Activated CD4-positive, alpha-beta T cell treated with anti-CD3 and anti-CD28 coated beads, Interleukin-2, amount 10 ng/mL, durations not matched to agents 24 days and 14 days (primary cell): ENCODE measurements at regions of chr7 and their contacts with region 1.

Region 1: DNA sequence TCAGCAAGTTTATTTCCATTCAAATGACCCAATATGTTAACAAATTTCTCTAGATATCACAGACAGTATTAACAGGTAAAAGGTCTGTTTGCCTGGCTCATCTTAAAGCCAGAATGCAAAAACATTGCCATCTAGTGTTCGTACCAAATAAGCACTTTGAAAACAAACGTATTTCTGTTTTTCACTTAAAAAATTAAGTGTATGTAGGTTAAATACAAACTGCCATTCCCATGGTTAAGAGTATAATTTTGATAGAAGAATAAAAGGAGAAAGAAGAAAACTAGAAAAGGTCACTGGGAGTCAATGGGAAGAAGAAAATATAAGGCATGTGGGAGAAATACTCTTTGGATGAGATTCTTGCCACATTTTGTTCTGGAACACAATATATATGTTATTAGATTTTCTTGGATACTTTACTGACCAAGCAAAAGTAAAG is 51.0 kb downstream of the ORC5 start:
- DNase-seq: no peak
- H3K4me3 Mint-ChIP-seq: no peak overlapping the region
- H3K27ac Mint-ChIP-seq: no peak overlapping the region
- H3K4me1 Mint-ChIP-seq: no peaks in the 10 kb centered on the region
- H3K27me3 Mint-ChIP-seq: no peaks in the 10 kb centered on the region

Region 2: GRCh38 chr7:103573479-103574058 is 583.3 kb before region 1 on chr7:
- intact Hi-C with region 1: loop called (anchors 1 kb)
- DNase-seq: no peak
- H3K4me3 Mint-ChIP-seq: no peak overlapping the region
- H3K27ac Mint-ChIP-seq: no peak overlapping the region
- H3K4me1 Mint-ChIP-seq: no peaks in the 10 kb centered on the region
- H3K27me3 Mint-ChIP-seq: peaks cover 6% of the 10 kb centered on the region

Region 3: DNA sequence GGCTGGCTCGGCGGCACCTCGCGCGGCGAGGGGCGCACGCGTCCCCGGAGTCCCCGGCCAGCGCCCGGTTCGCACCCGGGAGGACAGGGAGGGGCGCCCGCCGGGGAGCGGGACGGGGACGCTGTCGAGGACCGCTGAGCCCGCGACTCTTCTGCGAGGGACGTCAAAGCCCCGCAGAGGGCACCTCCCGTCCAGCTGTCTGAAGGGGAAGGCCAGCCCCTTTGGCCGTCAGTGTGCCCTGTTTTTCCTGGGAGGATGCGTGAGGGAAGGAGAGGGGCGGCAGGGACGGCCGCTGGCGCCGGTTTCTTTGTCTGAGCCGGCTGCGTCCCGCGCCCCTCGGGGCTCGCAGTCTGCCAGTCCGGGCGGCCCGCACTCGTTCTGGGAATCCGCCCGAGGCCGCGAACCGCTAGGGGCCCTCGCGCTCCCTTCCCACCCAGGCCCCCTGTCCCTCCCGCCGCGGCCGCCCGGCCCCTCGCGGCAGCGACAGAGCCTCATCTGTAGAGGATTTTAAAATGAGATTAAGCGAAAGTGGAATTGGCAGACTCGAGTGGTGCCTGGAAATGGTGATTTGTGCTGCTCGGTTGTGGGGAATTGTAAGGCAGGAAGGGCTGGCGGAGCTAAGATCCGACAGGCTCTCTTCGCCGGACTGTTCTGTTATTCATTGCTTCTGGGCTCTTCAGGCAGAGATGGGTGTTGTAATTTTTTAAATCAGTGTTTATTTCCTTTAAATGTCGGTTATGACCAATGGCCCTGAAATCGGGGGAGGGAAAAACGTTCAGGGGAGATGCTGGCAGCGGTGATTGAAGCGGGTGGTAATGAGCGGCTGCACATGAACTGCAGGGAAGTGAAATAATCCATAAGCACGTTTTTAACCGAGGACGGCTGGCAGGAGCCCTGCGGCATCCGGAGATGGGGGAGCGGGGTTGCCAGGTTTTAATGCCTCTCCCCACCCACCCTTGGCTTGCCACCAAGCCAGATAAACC is 166.8 kb before region 1 on chr7:
- intact Hi-C with region 1: loop called (anchors 10 kb)
- DNase-seq: peak; percentile 59
- H3K4me3 Mint-ChIP-seq: peak overlapping the region; percentile 67
- H3K27ac Mint-ChIP-seq: peak overlapping the region; percentile 2
- H3K4me1 Mint-ChIP-seq: peaks cover 6% of the 10 kb centered on the region
- H3K27me3 Mint-ChIP-seq: peaks cover 58% of the 10 kb centered on the region

Region 4: DNA sequence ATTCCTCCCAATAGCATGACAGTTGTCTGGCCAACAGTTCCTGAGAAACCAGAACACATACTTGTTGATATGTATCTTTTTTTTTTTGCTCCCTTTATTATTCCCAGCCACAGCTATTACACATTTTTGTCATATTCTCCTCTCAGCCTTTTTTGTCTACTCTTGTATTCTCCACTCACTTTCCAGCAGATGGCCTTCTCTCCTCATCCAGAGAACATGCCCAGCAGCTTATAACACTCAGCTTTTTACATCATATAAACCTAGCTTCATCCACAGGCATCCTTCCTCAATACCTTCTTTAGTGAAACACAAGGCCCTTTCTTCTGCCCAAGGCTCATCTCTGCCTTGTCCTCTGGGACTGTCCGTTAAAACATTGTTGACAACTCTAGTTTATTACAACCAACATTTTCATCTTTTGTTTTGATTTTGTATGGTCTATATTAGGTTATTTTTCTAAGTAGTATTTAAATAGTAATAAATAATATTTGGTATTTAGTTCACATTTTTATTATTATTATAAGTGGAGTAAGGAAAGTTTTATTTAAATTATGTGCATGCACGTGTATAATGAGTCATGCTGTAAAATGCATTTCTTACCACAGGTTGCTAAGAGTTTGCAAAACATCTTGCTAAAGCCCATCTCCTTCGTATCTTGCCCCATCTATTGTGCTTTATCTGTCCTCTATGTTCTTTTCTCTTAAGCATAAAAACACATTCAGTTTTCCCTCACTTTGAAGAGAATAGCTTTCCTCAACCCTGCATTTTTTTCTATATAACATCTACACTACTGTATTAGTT is 50.6 kb before region 1 on chr7:
- intact Hi-C with region 1: loop called (anchors 2 kb)
- DNase-seq: no peak
- H3K4me3 Mint-ChIP-seq: no peak overlapping the region
- H3K27ac Mint-ChIP-seq: no peak overlapping the region
- H3K4me1 Mint-ChIP-seq: no peaks in the 10 kb centered on the region
- H3K27me3 Mint-ChIP-seq: no peaks in the 10 kb centered on the region

Region 5: DNA sequence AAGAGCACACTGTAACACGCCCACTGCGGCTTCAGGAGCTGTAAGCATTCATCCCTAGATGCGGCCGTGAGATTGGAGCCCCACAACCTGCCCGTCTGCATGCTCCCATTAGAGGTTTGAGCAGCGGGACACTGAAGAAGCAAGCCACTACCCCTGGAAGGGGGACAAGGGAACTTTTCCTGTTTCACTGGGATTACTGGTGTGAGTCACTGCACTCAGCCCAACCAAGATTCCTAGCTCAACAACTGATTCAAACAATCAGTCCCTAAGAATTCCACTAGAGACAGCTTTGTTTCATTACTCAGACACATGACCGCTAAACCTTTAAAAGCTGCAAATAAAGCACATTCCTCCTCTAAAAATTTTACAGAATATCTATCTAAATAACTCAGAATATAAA is 18.9 kb before region 1 on chr7:
- intact Hi-C with region 1: no loop called
- DNase-seq: no peak
- H3K4me3 Mint-ChIP-seq: no peak overlapping the region
- H3K27ac Mint-ChIP-seq: no peak overlapping the region
- H3K4me1 Mint-ChIP-seq: peaks cover 7% of the 10 kb centered on the region
- H3K27me3 Mint-ChIP-seq: no peaks in the 10 kb centered on the region